CD14-positive monocyte (primary cell): ENCODE measurements at regions of chr15 and their contacts with region 1.

Region 1: DNA sequence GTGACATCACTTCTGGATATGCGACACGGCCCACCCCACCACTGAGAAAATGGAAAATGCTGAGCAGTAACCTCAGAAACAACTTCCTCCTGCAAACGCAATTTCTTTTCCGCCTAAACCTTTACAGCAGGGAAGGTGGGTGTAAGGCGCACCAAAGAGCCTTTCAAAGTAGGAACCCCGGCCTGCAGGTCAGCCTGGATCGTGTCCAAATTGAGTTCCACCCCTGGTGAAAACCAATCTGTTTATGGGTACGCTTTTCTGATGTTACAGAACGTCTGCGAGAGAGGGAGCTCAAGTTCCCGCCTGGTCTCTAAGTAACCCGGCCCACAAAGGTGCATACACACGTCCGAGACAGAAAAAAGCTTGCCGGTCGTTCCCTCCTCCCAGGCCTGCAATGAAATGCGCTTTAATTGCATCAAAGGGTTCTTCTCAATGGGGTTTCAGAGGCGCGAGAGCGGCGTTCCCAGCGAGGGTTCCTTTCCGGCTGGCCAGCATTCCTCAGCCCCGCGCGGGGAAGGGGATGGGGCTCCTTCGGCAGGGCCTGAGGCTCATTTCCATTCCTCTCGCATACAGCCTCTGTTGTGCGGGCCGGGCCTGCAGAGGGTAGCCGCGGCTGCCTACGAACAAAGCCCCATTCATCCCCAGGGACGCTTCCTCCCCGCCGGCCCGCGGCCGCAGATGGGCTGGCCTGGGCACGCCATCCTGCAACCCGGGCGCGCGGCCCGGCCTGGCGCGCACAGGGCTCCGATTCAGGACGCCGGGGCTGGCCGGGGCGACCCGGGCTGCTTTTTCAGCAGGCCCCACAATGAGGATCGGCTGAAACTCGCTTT is 138.1 kb downstream of the TMCO5A start:
- DNase-seq: peak; percentile 30 to 76 (median 66)
- H3K4me3 ChIP-seq: peak overlapping the region; percentile 41 to 78 (median 55)
- H3K4me3 Mint-ChIP-seq: peak overlapping the region; percentile 76 to 92
- H3K27ac ChIP-seq: peak overlapping the region; percentile 83 to 86
- H3K27ac Mint-ChIP-seq: peak overlapping the region; percentile 86 to 100 (median 93)
- H3K4me1 ChIP-seq: peaks cover 52 to 61% of the 10 kb centered on the region in 2 donors
- H3K4me1 Mint-ChIP-seq: peaks cover 62% of the 10 kb centered on the region
- H3K27me3 ChIP-seq: peaks cover 3 to 21% of the 10 kb centered on the region in 2 donors
- H3K27me3 Mint-ChIP-seq: peaks cover 17 to 23% (median 22%) of the 10 kb centered on the region in 3 donors
- CTCF ChIP-seq: no peak

Region 2: GRCh38 chr15:38012894-38013293 is 59.7 kb before region 1 on chr15:
- intact Hi-C with region 1: loop called (anchors 5 to 10 kb)
- DNase-seq: no peak
- H3K4me3 ChIP-seq: no peak overlapping the region
- H3K4me3 Mint-ChIP-seq: no peak overlapping the region
- H3K27ac ChIP-seq: no peak overlapping the region
- H3K27ac Mint-ChIP-seq: no peak overlapping the region
- H3K4me1 ChIP-seq: peaks cover 8% of the 10 kb centered on the region in 2 donors
- H3K4me1 Mint-ChIP-seq: peaks cover 13% of the 10 kb centered on the region
- H3K27me3 ChIP-seq: no peaks in the 10 kb centered on the region
- H3K27me3 Mint-ChIP-seq: peaks cover 2 to 6% (median 3%) of the 10 kb centered on the region in 3 donors
- CTCF ChIP-seq: no peak

Region 3: DNA sequence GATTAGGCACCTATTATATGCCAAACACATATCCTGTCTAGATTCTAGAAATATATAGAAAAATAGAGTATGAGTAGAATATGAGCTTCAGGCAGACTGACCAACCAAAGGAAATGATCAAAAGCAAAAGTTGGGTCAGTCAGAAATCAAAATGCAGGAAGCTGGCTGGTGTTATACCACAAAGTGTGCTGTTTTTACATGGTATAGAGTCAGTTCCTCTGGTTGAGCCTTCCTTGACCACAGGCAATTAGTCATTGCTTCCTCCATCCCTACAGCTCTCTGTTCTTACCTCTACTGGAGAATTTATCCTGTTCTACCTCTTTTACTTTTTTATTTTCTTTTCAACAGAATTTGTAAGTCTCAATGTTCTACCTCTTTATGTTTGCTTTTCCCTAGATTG is 11.7 kb after region 1 on chr15:
- intact Hi-C with region 1: loop called in 1 of 2 experiments (anchors 2 kb)
- DNase-seq: peak; percentile 68 to 86 (median 72)
- H3K4me3 ChIP-seq: peak overlapping the region in 1 of 3 experiments; percentile 57
- H3K4me3 Mint-ChIP-seq: peak overlapping the region in 1 of 2 donors; percentile 56
- H3K27ac ChIP-seq: peak overlapping the region in 1 of 2 donors; percentile 80
- H3K27ac Mint-ChIP-seq: peak overlapping the region; percentile 87 to 94 (median 91)
- H3K4me1 ChIP-seq: peaks cover 54 to 66% of the 10 kb centered on the region in 2 donors
- H3K4me1 Mint-ChIP-seq: peaks cover 57% of the 10 kb centered on the region
- H3K27me3 ChIP-seq: peaks cover 0 to 3% of the 10 kb centered on the region in 2 donors
- H3K27me3 Mint-ChIP-seq: peaks cover 3 to 5% (median 5%) of the 10 kb centered on the region in 3 donors
- CTCF ChIP-seq: no peak

Region 4: DNA sequence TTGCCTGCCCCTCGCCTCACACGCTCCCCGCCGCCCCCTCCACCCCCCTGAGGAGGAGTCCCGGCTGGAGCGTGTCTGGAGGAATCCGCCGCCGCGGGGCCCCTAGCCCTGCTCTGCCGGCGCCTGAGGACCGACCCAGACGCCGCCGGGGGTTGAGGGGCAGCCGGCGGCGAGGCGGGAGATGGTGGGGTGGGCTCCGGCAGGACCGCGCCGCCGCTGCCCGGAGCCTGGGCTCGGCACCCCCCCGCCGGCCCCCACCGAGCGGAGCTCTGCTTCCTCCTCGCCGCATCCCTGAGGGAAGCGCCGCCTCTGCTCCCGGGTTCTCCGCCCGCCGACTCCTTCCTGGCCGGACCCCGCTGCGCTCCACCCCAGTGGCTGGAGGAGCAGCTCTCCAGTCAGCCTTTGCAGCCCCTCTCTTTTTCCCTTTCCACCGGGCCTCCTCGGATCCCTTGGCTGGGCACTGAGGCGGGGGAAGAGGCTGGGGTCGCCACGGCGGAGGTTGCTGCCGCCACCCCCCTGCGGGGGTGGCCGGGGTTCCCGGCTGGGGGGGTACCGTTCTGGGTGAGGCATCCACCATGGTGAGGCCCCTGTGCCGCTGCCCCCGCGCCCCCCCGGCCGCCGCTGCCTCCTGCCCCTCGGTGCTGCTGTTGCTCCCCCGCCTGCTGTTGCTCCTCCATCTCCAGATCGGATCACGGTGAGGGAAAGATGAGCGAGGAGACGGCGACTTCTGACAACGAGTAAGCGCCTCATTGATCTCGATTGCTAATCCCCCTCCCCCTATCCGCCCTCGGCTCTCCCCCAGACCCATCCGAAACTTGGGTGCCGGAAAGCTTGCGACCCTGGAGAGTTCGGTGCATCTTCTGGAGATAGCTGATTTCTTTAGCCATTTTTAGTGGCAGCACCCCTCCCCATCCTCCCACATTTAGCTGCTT is 180.2 kb after region 1 on chr15 and contains the start of gene SPRED1:
- intact Hi-C with region 1: loop called in 1 of 2 experiments (anchors 5 kb)
- DNase-seq: peak in 2 of 3 donors; percentile 12 to 29
- H3K4me3 ChIP-seq: peak within 1 kb of the TSS; percentile 71 to 85 (median 85)
- H3K4me3 Mint-ChIP-seq: peak within 1 kb of the TSS; percentile 92 to 98
- H3K27ac ChIP-seq: peak within 1 kb of the TSS; percentile 51 to 80
- H3K27ac Mint-ChIP-seq: peak within 1 kb of the TSS; percentile 71 to 91 (median 83)
- H3K4me1 ChIP-seq: peaks cover 31 to 39% of the 10 kb centered on the region in 2 donors
- H3K4me1 Mint-ChIP-seq: peaks cover 31% of the 10 kb centered on the region
- H3K27me3 ChIP-seq: peaks cover 20 to 23% of the 10 kb centered on the region in 2 donors
- H3K27me3 Mint-ChIP-seq: peaks cover 14 to 34% (median 18%) of the 10 kb centered on the region in 3 donors
- CTCF ChIP-seq: no peak
- polyA plus RNA-seq, gene SPRED1: 2.5 to 3.3 (median 3.2) TPM

Region 5: DNA sequence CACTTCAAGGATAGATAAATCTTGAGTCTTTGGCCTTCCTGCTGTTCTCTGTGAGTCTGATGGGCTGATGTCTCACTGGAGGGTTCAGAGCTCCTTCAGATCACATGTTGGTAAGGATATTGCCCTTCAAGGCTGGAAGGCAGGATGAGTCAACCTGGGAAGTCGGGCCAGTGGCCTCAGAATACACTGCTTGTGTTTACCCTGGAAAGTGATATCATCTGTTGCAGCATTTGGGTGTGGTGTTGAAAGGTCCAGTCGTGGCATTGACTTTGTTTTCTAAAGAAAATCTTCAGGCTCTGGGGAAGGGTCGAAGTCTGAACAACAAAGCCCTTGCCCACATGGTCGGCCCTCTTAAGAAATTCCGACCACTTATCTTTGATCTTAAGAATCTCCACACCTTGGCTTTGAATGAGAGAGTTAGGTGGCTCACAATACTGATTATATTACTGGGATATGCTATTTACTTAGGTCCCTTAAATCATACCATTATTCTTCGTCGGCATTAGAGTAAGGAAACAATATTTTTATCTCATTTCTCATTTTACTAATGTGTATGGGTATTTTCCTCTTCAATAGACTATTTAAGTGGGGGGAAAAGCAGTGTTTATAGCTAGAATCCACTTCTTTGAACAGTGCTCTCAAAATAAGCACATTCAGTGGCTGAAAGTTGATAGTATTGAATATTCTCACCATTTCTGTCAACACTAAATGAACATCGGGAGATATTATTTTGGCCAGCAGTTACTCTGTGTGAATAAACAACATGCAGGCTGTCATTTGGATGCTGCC is 796.0 kb after region 1 on chr15:
- intact Hi-C with region 1: no loop called
- DNase-seq: no peak
- H3K4me3 ChIP-seq: no peak overlapping the region
- H3K4me3 Mint-ChIP-seq: no peak overlapping the region
- H3K27ac ChIP-seq: no peak overlapping the region
- H3K27ac Mint-ChIP-seq: no peak overlapping the region
- H3K4me1 ChIP-seq: peaks cover 0 to 10% of the 10 kb centered on the region in 2 donors
- H3K4me1 Mint-ChIP-seq: peaks cover 10% of the 10 kb centered on the region
- H3K27me3 ChIP-seq: no peaks in the 10 kb centered on the region
- H3K27me3 Mint-ChIP-seq: peaks cover 0 to 5% (median 1%) of the 10 kb centered on the region in 3 donors
- CTCF ChIP-seq: no peak